BJ (cell line): ENCODE measurements at regions of chr22 and their contacts with region 1.

Region 1: DNA sequence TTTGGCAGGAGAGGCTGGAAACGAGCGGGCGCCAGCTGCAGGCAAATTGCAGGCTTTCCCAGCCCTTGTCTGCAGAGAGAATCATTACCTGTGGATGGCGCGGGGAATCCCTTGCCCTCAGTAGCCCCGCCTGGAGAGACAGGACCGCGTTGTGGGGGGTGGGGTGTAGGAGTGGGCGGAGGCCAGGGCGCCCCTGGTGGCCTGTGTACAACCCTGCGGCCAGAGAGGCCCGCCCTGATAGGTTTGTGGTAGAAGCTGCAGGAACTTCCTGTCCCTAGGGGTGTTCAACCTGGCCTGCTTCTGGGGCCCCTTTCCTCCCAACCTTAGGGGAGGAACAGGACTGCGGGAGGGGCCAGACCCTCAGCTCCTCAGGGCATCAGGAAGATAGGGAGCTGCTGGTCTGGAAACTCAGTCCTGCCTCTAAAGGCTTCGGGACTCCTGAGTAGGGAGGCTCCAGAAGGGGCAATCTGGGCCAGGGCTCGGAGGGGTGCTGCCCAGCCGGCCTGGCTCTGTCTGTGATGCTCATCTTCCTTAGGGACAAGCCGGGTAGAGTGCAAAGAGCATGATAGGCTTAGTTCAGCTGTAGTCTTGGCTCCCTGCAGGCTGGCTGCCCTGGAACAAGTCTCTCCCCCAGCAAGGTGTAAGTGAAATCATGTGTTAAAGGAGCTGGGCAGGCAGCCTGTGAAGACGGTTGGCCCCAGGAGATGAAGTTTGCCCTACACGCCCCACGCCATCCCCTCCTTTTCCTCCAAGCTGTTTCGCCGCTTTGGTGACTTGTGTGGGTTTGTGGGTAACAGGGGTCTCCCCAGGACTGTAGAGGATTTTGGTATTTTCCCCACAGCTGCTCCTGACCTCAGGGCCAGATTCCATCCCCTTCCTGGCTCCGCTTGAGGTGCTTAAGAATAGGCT is 24.1 kb upstream of the SUSD2 start:
- DNase-seq: no peak
- H3K4me3 ChIP-seq: peak overlapping the region; percentile 65
- H3K27me3 ChIP-seq: no peaks in the 10 kb centered on the region
- CTCF ChIP-seq: peak; percentile 96

Region 2: DNA sequence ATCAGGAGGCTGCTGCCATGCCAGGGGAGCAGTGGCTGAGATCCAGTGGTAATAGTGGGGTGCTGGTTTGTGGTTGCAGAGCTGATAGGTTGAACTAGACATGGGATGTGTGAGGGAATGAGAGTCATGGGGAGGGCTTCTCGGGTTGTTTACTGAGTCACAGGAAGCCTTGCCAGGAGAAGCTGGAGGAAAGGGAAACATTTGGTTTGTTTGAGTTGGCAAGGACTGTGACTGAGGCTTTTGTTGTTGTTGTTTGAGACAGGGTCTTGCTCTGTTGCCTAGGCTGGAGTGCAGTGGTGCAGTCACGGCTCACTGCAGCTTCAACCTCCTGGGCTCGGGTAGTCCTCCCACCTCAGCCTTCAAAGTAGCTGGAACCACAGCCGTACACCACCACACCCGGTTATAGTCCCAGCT is 96.8 kb before region 1 on chr22:
- CTCF ChIA-PET with region 1: interaction called, 11 read pairs
- POLR2A ChIA-PET with region 1: no interaction called
- DNase-seq: peak; percentile 74
- H3K4me3 ChIP-seq: no peak overlapping the region
- H3K27me3 ChIP-seq: no peaks in the 10 kb centered on the region
- CTCF ChIP-seq: no peak

Region 3: GRCh38 chr22:24106385-24107381 is 50.5 kb before region 1 on chr22:
- CTCF ChIA-PET with region 1: interaction called, 26 read pairs
- POLR2A ChIA-PET with region 1: no interaction called
- DNase-seq: no peak
- H3K4me3 ChIP-seq: no peak overlapping the region
- H3K27me3 ChIP-seq: no peaks in the 10 kb centered on the region
- CTCF ChIP-seq: peak; percentile 27; the same call in 1 of the 2 replicates

Region 4: DNA sequence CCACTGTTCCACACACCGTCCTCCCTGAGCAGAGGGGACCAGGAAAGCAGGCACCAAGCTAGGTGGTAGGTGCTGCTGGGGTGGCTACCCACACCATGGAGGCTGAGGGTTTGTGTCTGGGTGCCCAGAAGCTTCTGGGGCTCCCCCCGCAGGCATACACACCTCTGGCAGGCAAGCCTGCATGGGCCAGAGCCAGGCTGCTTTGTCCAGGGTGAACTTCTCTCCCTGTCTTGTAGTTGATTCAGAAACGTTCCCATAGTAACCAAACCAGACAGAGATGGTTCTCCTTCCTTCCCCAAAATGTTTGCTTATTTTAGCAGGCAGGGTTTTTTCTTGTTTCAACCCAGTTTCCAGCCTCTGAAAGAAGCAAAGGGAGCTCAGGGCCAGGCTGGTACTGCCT is 16.8 kb before region 1 on chr22:
- CTCF ChIA-PET with region 1: interaction called, 35 read pairs
- POLR2A ChIA-PET with region 1: interaction called, 3 read pairs
- DNase-seq: no peak
- H3K4me3 ChIP-seq: no peak overlapping the region
- H3K27me3 ChIP-seq: no peaks in the 10 kb centered on the region
- CTCF ChIP-seq: no peak

Region 5: GRCh38 chr22:24175160-24175808 is 18.1 kb after region 1 on chr22:
- CTCF ChIA-PET with region 1: interaction called, 66 read pairs
- POLR2A ChIA-PET with region 1: interaction called, 3 read pairs
- DNase-seq: no peak
- H3K4me3 ChIP-seq: no peak overlapping the region
- H3K27me3 ChIP-seq: no peaks in the 10 kb centered on the region
- CTCF ChIP-seq: peak; percentile 96

Region 6: DNA sequence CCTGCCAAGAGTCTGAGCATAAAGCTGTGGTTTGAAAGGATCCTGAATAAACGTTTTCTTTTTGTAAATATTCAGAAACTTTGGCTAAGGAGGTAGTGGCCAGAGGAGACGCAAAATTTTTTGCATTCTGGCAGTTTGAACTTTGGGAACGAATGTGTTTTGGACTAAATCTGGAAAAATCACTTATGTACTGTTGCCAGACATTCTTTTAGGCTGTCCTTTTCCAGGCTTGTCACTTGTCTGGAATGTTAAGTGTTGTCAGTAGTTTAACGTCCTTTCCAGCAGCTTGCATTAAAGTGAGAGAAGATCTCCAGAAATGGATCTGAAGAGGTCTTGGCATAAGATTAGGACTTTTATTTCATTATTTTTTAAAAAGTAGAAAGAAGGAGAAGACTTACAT is 131.9 kb after region 1 on chr22:
- CTCF ChIA-PET with region 1: no interaction called
- POLR2A ChIA-PET with region 1: no interaction called
- DNase-seq: peak; percentile 93
- H3K4me3 ChIP-seq: no peak overlapping the region
- H3K27me3 ChIP-seq: no peaks in the 10 kb centered on the region
- CTCF ChIP-seq: no peak